ENCODE measurements at regions of chr1 and their contacts with region 1.

Region 1: DNA sequence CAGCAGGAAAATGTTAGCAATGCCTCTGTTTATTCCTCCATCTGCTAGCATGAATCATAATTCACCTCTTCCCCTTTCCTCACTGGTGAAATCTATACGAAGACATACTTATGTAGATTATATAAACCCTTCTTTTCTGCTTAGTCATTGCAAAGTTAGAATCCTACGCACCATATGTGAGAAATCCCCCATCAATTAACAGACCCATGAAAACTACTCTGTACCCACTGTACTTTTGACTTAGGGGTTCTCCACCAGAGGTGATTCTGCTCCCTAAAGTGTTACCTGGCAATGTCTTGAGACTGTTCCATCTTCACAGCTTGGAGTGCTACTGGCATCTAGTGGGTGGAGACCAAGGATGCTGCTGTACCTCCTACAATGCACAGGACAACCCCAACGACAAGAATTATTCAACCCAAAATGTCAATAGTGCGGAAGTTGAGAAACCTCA is 49.6 kb upstream of the KCTD3 start:
- DNase-seq: peak; percentile 93
- ATAC-seq: peak; percentile 99
- H3K4me3 ChIP-seq: peak overlapping the region; percentile 45; the same call in 1 of the 2 replicates
- H3K27ac ChIP-seq: peak overlapping the region; percentile 20
- H3K4me1 ChIP-seq: peaks cover 14% of the 10 kb centered on the region
- H3K27me3 ChIP-seq: no peaks in the 10 kb centered on the region
- CTCF ChIP-seq: peak; percentile 99

Region 2: GRCh38 chr1:214658786-214659185 is 858.7 kb before region 1 on chr1:
- CTCF ChIA-PET with region 1: no interaction called
- POLR2A ChIA-PET with region 1: no interaction called
- intact Hi-C with region 1: loop called (anchors 1 kb)
- DNase-seq: peak; percentile 46
- ATAC-seq: peak; percentile 70
- H3K4me3 ChIP-seq: no peak overlapping the region
- H3K27ac ChIP-seq: no peak overlapping the region
- H3K4me1 ChIP-seq: no peaks in the 10 kb centered on the region
- H3K27me3 ChIP-seq: no peaks in the 10 kb centered on the region
- CTCF ChIP-seq: peak; percentile 65

Region 3: DNA sequence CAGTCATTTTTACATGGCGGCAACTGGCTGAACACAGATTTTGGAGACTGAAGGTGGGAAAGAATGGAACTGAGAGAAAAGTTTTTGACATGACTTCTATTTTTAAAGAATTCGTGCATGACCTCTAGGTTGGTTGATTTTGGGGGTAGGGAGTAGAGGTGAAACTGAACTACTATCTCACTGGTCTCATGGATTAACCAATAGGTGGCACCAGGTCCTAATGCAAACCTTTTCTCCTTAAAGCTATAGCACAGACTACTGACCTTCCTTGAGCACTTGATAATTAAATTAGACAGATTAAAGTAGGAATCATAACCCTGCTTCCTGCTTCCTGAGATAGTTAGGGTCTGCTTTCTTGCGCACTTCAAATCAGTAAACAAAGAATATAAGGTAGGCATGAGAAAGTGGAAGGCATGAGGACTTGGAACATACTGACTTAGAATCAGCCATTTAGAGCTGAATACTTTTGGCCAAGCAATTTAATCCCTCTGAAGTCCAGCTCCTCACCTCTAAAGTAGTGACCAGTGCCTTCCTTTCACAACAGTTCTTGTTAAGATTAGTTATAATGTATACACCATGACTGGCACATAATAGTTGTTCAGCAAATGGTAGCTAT is 708.5 kb before region 1 on chr1:
- CTCF ChIA-PET with region 1: no interaction called
- POLR2A ChIA-PET with region 1: no interaction called
- intact Hi-C with region 1: loop called (anchors 1 kb)
- DNase-seq: peak; percentile 85
- ATAC-seq: peak; percentile 99
- H3K4me3 ChIP-seq: no peak overlapping the region
- H3K27ac ChIP-seq: no peak overlapping the region
- H3K4me1 ChIP-seq: no peaks in the 10 kb centered on the region
- H3K27me3 ChIP-seq: no peaks in the 10 kb centered on the region
- CTCF ChIP-seq: peak; percentile 96

Region 4: GRCh38 chr1:214901718-214902117 is 615.7 kb before region 1 on chr1:
- CTCF ChIA-PET with region 1: no interaction called
- POLR2A ChIA-PET with region 1: no interaction called
- intact Hi-C with region 1: loop called (anchors 10 kb)
- DNase-seq: peak; percentile 99
- ATAC-seq: peak; percentile 85
- H3K4me3 ChIP-seq: peak overlapping the region; percentile 48
- H3K27ac ChIP-seq: peak overlapping the region; percentile 88
- H3K4me1 ChIP-seq: peaks cover 44% of the 10 kb centered on the region
- H3K27me3 ChIP-seq: no peaks in the 10 kb centered on the region
- CTCF ChIP-seq: no peak; the same call in 1 of the 2 replicates

Region 5: DNA sequence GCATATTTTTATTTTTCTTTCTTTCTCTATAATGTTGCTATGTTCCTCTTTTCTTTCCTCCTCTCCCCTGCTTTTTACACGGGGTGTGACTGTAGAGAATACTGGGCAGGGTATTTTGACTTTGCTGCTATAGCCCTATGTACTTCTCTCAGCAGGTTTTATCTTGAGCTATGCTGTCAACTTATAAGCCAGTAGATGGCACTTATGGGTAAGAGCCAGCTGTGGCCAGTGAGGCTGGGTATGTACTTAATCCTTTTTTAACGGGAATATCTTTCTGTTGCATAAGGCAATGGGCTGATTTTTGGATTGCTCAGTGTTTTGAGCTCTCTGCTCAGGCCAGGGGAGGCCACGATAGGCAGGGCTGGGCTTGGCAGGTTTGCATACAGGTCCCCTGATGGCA is 335.9 kb before region 1 on chr1:
- CTCF ChIA-PET with region 1: interaction called, 15 read pairs
- POLR2A ChIA-PET with region 1: no interaction called
- intact Hi-C with region 1: loop called (anchors 1 kb)
- DNase-seq: peak; percentile 80
- ATAC-seq: peak; percentile 99
- H3K4me3 ChIP-seq: no peak overlapping the region
- H3K27ac ChIP-seq: no peak overlapping the region
- H3K4me1 ChIP-seq: no peaks in the 10 kb centered on the region
- H3K27me3 ChIP-seq: no peaks in the 10 kb centered on the region
- CTCF ChIP-seq: peak; percentile 91

Region 6: DNA sequence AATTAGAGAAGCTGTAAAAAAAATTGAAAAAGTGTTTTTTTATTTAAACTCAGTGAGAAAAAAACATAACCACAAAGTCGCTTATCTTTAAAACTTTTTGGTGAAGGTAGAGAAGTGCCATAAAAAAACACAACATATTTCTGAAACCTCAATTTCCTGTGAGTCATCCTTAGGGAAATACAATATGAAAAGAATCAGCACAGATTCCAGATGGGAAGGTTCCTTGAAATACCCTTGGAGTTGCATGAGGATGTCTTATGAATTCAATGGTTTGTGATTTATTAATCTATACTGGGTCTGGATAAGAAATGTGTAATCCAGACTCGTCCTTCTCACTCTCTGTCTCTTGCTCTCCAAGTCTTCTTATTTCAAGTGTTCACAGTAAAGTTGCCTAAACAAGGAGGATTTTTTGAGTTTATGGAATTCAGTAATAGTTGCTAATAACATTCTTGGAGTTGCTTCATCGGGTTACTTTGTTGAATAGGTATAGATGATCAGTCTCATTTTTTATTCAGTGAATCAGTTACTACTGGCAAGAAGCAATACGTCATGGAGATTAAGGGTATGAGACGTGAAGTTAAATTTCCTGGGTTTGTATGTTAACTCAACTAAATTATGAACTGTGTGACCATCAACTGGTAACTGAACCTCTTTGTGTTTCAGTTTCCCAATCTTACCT is 243.5 kb before region 1 on chr1:
- CTCF ChIA-PET with region 1: no interaction called
- POLR2A ChIA-PET with region 1: no interaction called
- intact Hi-C with region 1: loop called (anchors 5 kb)
- DNase-seq: peak; percentile 94
- ATAC-seq: peak; percentile 98
- H3K4me3 ChIP-seq: no peak overlapping the region
- H3K27ac ChIP-seq: peak overlapping the region; percentile 10
- H3K4me1 ChIP-seq: peaks cover 18% of the 10 kb centered on the region
- H3K27me3 ChIP-seq: no peaks in the 10 kb centered on the region
- CTCF ChIP-seq: no peak

Region 7: DNA sequence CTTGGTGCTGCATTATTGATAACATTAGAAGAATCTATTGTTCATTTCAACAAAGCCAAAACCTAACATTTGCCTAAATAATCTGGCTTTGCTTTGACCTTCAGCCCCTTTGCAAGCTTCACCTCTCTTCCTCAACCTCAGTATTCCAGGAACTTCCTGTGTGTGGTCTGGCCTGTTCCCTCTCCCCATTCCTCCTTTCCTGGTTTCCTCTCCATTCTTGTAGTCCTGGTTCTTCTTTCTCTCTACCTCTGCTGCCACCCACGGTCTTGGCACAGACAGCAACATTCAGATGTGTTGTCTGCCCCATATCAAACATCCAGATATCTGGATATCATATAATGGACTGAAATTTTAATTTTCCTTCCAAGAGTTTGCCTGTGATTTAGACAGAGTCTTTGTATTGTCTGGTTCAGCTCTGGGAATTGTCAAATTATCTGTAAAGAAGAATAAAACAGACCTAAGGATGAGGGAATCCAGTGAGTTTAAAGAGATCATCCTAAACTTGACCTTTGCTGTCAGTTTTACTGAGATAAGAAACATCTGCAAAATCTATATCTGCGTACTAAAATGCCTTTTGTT is 98.5 kb before region 1 on chr1:
- CTCF ChIA-PET with region 1: no interaction called
- POLR2A ChIA-PET with region 1: no interaction called
- intact Hi-C with region 1: loop called (anchors 1 kb)
- DNase-seq: peak; percentile 25
- ATAC-seq: no peak
- H3K4me3 ChIP-seq: no peak overlapping the region
- H3K27ac ChIP-seq: no peak overlapping the region
- H3K4me1 ChIP-seq: peaks cover 44% of the 10 kb centered on the region
- H3K27me3 ChIP-seq: no peaks in the 10 kb centered on the region
- CTCF ChIP-seq: no peak

Region 8: DNA sequence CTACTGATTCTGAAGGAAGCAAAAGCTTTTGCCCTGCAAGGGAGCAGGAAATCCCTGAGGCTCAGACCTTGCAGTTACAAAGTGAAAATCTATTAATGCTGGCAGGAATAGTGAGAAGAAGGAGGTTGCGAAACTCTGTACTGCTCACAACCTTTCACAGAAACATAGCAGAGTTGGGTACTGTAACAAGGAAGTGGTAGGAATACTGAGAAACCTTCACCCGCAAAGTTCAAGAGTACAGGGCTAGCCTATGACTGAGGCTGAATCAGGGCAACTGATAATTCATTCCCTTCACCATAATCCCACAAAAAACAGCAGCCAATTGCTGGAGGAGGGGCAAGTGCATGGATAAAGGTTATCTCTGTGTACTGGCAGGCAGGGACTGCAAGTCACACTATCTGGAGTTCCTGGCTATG is 25.7 kb after region 1 on chr1:
- CTCF ChIA-PET with region 1: no interaction called
- POLR2A ChIA-PET with region 1: no interaction called
- intact Hi-C with region 1: no loop called
- DNase-seq: peak; percentile 70
- ATAC-seq: no peak
- H3K4me3 ChIP-seq: no peak overlapping the region
- H3K27ac ChIP-seq: no peak overlapping the region
- H3K4me1 ChIP-seq: peaks cover 15% of the 10 kb centered on the region
- H3K27me3 ChIP-seq: no peaks in the 10 kb centered on the region
- CTCF ChIP-seq: no peak